ENCODE measurements at regions of chr5 and their contacts with region 1.

Region 1: DNA sequence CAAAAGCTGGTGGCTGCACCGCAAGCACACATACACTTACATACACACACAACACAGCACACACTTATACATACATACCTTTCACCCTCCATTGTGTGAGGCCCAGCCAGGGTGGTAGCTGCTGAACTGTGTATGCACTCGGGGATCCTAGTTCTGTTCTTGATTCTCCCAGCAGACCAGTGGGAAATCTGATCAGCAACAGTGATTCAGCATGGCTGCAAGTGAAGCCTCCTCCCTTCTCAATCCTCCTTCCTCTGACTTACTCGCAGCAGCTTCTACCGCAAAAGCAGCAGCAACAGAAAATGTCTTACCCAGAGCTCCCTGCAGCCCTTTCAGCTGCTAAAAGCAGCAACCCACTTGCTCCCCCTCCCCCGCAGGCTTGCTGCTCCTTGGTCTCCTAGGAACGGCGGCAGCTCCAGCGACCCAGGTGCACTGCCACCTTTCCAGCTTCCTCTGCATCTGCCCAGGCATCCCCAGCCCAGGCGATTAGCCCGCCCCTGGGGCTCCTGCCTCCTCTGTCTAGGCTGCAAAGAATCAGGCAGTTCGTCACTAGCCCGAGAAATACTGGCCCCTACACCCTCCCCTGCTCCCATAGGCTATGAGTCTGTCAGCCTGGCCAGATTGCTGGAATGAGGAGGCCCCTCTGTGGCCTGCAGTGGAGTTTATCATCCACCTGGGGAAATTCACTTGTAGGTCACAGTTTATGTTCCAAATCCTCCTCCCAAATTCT is at the start of gene KLHL3:
- DNase-seq: peak; percentile 68
- H3K4me3 ChIP-seq: peak within 1 kb of the TSS; percentile 41 to 42
- H3K27ac ChIP-seq: peak within 1 kb of the TSS; percentile 2 to 39
- H3K4me1 ChIP-seq: peaks cover 0 to 14% of the 10 kb centered on the region in 2 experiments; a peak in 2 of 4 replicates
- H3K27me3 ChIP-seq: no peaks in the 10 kb centered on the region
- CTCF ChIP-seq: peak; percentile 33; the same call in 1 of the 2 replicates
- EP300 ChIP-seq: no peak
- RAD21 ChIP-seq: peak; percentile 76
- polyA plus RNA-seq, gene KLHL3: 3.8 and 4.9 TPM in 2 replicates

Region 2: DNA sequence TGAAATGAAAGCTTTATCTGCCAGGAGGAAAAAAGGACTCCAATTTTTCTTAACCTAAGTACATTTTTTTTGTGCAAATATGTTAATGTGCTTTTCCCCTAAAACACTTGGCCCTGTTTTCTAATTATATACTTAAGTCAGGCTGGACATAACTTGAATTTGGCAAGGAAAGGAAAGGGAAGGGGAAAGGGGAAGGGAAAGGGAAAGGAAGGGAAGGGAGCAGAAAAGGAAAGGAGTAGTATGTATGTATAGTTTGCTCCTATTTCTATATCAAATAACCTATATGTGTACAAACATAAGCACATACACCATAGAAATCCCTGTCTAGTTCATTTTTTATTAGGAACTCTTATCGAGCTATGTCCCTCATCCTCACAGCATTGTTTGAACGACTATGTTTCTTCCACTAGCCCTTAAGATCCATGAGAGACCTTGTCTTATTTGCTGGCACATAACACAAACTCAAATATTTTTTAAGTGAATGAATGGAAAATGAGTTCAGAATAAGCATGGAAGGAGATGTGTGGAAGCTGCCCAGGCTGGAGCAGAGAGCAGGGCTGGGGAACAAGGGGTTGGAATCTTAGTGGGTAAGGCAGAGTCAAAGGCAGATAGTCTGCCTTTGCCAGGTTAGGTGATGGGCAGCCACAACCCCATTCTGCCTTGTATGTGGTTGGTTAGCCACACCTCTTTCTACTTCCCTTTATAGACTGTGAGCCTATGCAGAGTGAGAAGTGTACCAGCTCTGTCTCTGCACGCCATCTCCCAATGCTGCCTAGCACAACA is 69.9 kb before region 1 on chr5:
- CTCF ChIA-PET with region 1: interaction called, 239 read pairs
- POLR2A ChIA-PET with region 1: no interaction called
- DNase-seq: no peak
- H3K4me3 ChIP-seq: no peak overlapping the region
- H3K27ac ChIP-seq: no peak overlapping the region
- H3K4me1 ChIP-seq: no peaks in the 10 kb centered on the region; a peak in 1 of 4 replicates
- H3K27me3 ChIP-seq: no peaks in the 10 kb centered on the region
- CTCF ChIP-seq: no peak
- EP300 ChIP-seq: no peak
- RAD21 ChIP-seq: no peak

Region 3: DNA sequence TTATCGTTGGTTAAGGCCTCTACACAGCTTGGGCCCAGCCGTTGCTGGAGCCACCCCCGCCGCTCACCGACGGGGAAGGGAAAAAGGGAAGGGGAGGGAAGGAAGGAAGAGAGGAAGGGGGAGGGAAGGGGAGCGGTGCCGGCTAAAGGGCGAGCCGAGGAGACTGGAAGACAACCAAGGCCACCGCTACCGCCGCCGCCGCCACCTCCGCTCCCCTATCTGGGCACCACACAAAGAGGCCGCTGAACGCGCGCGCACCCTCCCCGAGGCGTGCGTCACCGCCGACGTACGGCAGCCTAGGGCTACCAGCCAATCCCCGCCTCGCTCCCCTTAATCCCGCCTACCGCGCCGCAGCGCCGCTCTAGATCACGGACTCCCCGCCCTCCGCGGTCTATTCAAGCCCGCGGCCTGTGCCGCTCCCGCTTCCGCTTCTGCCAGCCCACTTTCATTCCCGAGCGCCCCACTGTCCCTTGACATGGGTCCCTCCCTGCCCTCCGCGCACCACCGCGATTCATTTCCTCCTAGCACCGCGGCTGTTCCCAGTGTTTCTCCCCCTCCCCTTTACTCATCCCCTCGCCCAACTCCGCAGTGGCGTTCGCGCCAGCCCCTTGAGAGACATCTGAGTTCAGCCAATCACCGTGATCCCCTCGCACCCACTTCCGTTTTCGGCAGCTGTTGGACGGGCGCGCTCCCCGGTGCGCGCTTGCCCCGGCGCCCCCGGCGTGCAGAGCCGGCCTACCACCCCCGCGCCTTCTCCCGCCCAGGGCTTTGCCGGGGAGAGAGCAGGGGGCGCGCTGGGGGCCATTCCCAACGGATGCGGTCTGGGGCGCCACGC is 18.6 kb after region 1 on chr5 and contains the start of gene HNRNPA0:
- CTCF ChIA-PET with region 1: interaction called, 10 read pairs
- POLR2A ChIA-PET with region 1: no interaction called
- DNase-seq: peak; percentile 97
- H3K4me3 ChIP-seq: peak within 1 kb of the TSS; percentile 93 to 94
- H3K27ac ChIP-seq: peak within 1 kb of the TSS; percentile 97
- H3K4me1 ChIP-seq: peaks cover 0 to 6% of the 10 kb centered on the region in 2 experiments; a peak in 2 of 4 replicates
- H3K27me3 ChIP-seq: no peaks in the 10 kb centered on the region
- CTCF ChIP-seq: no peak
- EP300 ChIP-seq: peak; percentile 97 to 99
- RAD21 ChIP-seq: no peak
- polyA plus RNA-seq, gene HNRNPA0: 19.2 and 24.9 TPM in 2 replicates

Region 4: GRCh38 chr5:137792303-137792702 is 56.6 kb after region 1 on chr5:
- CTCF ChIA-PET with region 1: no interaction called
- POLR2A ChIA-PET with region 1: no interaction called
- DNase-seq: no peak
- H3K4me3 ChIP-seq: no peak overlapping the region
- H3K27ac ChIP-seq: no peak overlapping the region
- H3K4me1 ChIP-seq: no peaks in the 10 kb centered on the region; a peak in 1 of 4 replicates
- H3K27me3 ChIP-seq: no peaks in the 10 kb centered on the region
- CTCF ChIP-seq: no peak
- EP300 ChIP-seq: no peak
- RAD21 ChIP-seq: no peak

Region 5: DNA sequence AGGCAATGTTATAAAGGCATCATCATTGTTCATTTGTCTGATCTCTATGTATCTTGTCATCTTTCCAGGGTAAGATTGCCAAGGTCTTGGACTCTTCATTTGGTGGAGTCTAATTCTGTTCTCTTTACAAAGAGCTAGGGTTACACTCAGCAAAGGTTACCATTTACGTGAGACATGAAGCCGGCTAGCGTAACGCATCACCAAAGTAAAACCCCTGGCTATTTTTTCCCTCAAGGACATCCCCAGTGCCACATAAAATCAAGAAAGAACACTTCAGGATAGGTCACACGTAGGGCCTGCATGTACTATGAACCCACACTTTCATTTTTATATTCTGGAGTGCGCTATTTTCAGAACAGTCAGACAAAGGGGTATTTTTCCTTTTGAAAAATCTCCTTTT is 112.0 kb after region 1 on chr5:
- CTCF ChIA-PET with region 1: no interaction called
- POLR2A ChIA-PET with region 1: no interaction called
- DNase-seq: no peak
- H3K4me3 ChIP-seq: no peak overlapping the region
- H3K27ac ChIP-seq: no peak overlapping the region
- H3K4me1 ChIP-seq: 0 out of 4 replicates have a peak, but pooled peaks cover 0 to 2% of the 10 kb centered on the region in 2 experiments
- H3K27me3 ChIP-seq: no peaks in the 10 kb centered on the region
- CTCF ChIP-seq: no peak
- EP300 ChIP-seq: no peak
- RAD21 ChIP-seq: no peak

Measured in SK-N-SH (cell line).